SK-N-SH (cell line): ENCODE measurements at regions of chr11 and their contacts with region 1.

Region 1: DNA sequence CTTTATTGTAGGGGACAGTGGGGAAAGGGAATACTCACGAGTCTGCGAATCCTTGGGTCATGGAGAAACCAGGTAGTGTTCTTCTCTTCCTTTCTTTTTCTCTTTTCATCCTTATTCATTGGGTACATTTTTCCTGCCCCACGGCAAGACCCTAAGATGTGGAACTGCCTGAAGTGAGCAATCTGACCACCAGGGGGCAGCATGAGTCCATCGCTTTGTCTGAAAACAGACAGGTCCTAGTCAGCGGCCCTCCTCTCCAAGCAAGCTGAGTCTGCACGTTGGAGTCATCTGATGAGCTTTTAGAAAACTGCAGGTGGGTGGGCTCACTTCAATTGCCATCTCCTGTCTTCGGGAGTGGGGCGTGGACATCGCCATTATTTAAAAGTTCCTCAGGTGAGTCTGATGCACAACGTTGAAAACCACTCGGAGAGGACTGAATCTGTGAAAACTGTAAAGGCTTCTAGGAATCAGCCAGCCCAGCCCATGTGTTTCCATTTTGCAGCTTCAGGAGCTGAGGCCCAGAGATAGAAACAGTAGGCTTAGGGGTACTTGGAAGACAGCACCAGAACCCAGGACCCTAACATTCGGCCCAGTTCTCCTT is 34.0 kb upstream of the FBXO3 start:
- DNase-seq: peak; percentile 71
- H3K4me3 ChIP-seq: peak overlapping the region in 1 of 2 experiments; percentile 25; a peak in 1 of 4 replicates
- H3K27ac ChIP-seq: no peak overlapping the region
- H3K4me1 ChIP-seq: no peaks in the 10 kb centered on the region; a peak in 2 of 4 replicates
- H3K27me3 ChIP-seq: peaks cover 6% of the 10 kb centered on the region; the same call in 1 of the 2 replicates
- CTCF ChIP-seq: peak; percentile 88
- EP300 ChIP-seq: no peak
- RAD21 ChIP-seq: peak; percentile 83

Region 2: GRCh38 chr11:33773987-33774735 is 34.2 kb before region 1 on chr11 and contains the start of gene FBXO3:
- CTCF ChIA-PET with region 1: interaction called, 14 read pairs
- POLR2A ChIA-PET with region 1: interaction called, 3 read pairs
- DNase-seq: peak; percentile 98
- H3K4me3 ChIP-seq: peak within 1 kb of the TSS; percentile 83 to 93
- H3K27ac ChIP-seq: peak within 1 kb of the TSS; percentile 59 to 74; a peak in 3 of 4 replicates
- H3K4me1 ChIP-seq: peaks cover 29 to 38% of the 10 kb centered on the region in 2 experiments; a peak in 3 of 4 replicates
- H3K27me3 ChIP-seq: no peaks in the 10 kb centered on the region
- CTCF ChIP-seq: no peak
- EP300 ChIP-seq: no peak
- RAD21 ChIP-seq: no peak
- polyA plus RNA-seq, gene FBXO3: 17.9 and 27.0 TPM in 2 replicates

Region 3: DNA sequence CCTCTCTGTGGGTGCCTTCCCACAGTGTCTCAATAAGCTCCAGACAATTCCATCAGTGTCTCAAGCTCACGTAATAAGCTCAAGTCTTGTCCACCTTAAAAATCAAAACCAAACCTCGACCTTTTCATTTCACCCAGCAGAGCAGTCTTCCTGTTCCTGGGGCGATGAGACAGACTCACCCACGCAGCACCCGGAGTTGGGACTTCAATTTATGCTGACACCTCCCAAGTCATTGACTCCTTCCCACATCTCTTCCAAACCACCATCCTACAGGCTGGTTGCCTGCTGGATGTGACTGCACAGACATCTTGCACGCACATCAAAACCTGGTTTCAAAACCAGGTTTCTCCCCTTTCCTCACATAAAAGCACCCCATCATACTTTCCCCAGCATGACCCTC is 10.9 kb after region 1 on chr11:
- CTCF ChIA-PET with region 1: interaction called, 213 read pairs
- POLR2A ChIA-PET with region 1: no interaction called
- DNase-seq: no peak
- H3K4me3 ChIP-seq: no peak overlapping the region
- H3K27ac ChIP-seq: no peak overlapping the region
- H3K4me1 ChIP-seq: no peaks in the 10 kb centered on the region
- H3K27me3 ChIP-seq: peaks cover 18% of the 10 kb centered on the region
- CTCF ChIP-seq: no peak
- EP300 ChIP-seq: no peak
- RAD21 ChIP-seq: no peak

Region 4: GRCh38 chr11:33835143-33835878 is 27.0 kb after region 1 on chr11:
- CTCF ChIA-PET with region 1: interaction called, 213 read pairs
- POLR2A ChIA-PET with region 1: no interaction called
- DNase-seq: peak; percentile 39
- H3K4me3 ChIP-seq: no peak overlapping the region; a peak in 1 of 4 replicates
- H3K27ac ChIP-seq: no peak overlapping the region
- H3K4me1 ChIP-seq: peaks cover 0 to 23% of the 10 kb centered on the region in 2 experiments; a peak in 2 of 4 replicates
- H3K27me3 ChIP-seq: peaks cover 17% of the 10 kb centered on the region; the same call in 1 of the 2 replicates
- CTCF ChIP-seq: peak; percentile 60
- EP300 ChIP-seq: no peak
- RAD21 ChIP-seq: peak; percentile 70

Region 5: DNA sequence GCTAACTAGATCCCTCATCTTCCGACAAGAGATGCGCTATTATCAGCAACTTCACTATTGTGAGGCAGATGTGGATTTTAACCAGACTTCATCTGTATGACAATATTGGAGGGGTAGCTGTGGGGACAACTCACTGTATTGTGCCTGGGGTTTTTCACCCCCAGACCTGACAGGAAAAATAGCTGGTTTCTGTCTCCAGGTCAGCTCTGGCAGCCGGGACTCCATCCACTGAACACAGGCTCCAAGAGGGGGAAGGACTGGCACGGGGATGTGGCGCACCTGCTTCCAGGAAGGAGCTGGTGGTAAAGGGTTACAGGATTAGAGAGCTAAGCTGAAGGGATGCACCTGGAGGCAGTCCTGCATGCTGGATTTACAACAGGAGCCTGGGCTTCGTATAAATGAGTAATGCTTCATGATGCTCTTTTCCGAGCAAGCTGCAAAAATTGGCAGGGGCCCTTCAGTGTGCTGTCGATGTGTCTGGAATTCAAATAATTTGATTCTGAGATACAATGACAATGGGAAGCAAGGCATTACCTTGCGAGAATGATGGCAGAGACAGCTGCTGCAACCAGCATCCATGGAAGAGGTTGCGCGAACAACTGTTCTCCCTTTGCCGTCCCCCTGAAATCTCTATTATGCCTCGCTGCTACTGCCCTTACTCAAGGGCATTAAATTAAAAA is 34.0 kb after region 1 on chr11:
- CTCF ChIA-PET with region 1: interaction called, 31 read pairs
- POLR2A ChIA-PET with region 1: no interaction called
- DNase-seq: peak; percentile 53
- H3K4me3 ChIP-seq: peak overlapping the region in 1 of 2 experiments; percentile 35; a peak in 2 of 4 replicates
- H3K27ac ChIP-seq: peak overlapping the region in 1 of 2 experiments; percentile 47; a peak in 2 of 4 replicates
- H3K4me1 ChIP-seq: peaks cover 7 to 9% of the 10 kb centered on the region in 2 experiments; a peak in 3 of 4 replicates
- H3K27me3 ChIP-seq: peaks cover 39% of the 10 kb centered on the region
- CTCF ChIP-seq: no peak
- EP300 ChIP-seq: no peak
- RAD21 ChIP-seq: no peak

Region 6: GRCh38 chr11:33912405-33913361 is 104.4 kb after region 1 on chr11:
- CTCF ChIA-PET with region 1: no interaction called
- POLR2A ChIA-PET with region 1: no interaction called
- DNase-seq: no peak
- H3K4me3 ChIP-seq: no peak overlapping the region
- H3K27ac ChIP-seq: no peak overlapping the region
- H3K4me1 ChIP-seq: peaks cover 0 to 18% of the 10 kb centered on the region in 2 experiments; a peak in 2 of 4 replicates
- H3K27me3 ChIP-seq: peaks cover 20% of the 10 kb centered on the region; the same call in 1 of the 2 replicates
- CTCF ChIP-seq: no peak
- EP300 ChIP-seq: no peak
- RAD21 ChIP-seq: no peak

Region 7: DNA sequence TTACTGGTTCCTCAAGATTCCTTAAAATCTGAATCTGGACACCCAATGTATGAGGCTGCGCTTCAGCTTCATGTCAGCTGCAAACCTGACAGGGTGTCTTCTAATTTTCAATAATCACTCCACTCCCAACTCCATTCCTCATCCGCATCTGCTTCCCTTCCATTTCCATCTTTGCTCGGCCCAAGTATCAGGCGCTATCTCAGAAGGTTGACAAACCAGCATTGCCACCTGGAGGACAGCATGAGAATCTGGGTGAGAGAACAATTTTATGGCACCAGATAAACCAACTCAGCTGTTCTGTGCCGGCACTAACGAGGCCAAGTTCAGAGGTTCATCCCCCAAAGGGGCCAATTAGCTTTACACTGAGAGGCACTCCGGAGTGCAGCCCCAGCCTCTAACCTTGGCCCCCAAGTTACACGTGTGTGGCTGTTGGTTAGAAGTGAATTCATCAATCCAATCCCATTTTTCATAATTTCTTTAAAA is 162.7 kb after region 1 on chr11:
- CTCF ChIA-PET with region 1: interaction called, 15 read pairs
- POLR2A ChIA-PET with region 1: no interaction called
- DNase-seq: peak; percentile 66
- H3K4me3 ChIP-seq: no peak overlapping the region
- H3K27ac ChIP-seq: no peak overlapping the region
- H3K4me1 ChIP-seq: peaks cover 0 to 7% of the 10 kb centered on the region in 2 experiments; a peak in 1 of 4 replicates
- H3K27me3 ChIP-seq: peaks cover 14% of the 10 kb centered on the region; the same call in 1 of the 2 replicates
- CTCF ChIP-seq: peak; percentile 66
- EP300 ChIP-seq: no peak
- RAD21 ChIP-seq: peak; percentile 89